ENCODE measurements at regions of chr2 and their contacts with region 1.

Region 1: DNA sequence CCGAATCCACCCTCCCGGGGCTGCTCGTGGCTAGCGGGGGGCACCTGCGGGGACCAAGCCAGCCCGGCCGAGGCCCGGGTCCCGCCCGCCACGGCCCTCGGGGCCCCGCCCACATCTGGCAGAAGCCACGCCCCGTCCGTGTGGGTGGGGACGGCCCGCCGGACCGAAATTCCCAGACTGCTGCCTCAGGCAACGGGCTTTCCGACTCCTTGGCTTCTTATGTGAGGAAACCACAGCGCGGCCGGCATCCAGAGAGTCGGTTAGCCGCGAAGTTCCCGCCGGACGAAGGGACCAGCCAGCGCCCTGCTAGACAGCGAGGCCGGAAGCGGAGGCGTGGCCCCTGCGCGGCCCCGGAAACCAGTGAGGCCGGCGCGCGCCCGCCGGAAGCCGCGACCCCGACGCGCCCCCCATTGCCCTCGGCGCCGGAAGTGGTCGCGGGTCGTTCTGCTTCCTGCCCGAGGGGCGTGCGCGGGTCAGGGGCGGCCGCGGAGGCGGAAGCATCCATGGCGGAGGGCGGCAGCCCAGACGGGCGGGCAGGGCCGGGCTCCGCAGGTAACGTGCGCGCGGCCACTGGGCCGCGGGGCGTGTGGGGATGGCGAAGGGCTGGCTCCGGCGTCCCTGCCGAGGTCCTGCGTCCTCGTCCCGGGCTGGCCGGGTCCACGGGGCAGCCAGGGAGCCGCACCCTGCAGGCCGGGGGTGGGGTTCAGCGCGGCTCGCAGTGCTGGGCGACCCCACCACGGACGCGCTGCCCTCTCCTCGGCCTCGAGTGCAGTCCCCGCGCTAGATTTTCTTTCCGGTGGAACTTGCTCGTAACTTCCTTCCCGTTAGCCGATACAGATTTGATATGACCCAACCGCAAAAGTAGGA is at the start of gene ASB1:
- DNase-seq: peak; percentile 80
- H3K4me3 Mint-ChIP-seq: peak within 1 kb of the TSS; percentile 89
- H3K27ac Mint-ChIP-seq: peak within 1 kb of the TSS; percentile 91
- H3K4me1 Mint-ChIP-seq: peaks cover 42% of the 10 kb centered on the region
- H3K27me3 Mint-ChIP-seq: no peaks in the 10 kb centered on the region
- total RNA-seq, gene ASB1: 29.9 to 33.7 TPM

Region 2: GRCh38 chr2:238415036-238415764 is 11.6 kb before region 1 on chr2:
- CTCF ChIA-PET with region 1: no interaction called
- intact Hi-C with region 1: no loop called
- DNase-seq: peak; percentile 56
- H3K4me3 Mint-ChIP-seq: no peak overlapping the region
- H3K27ac Mint-ChIP-seq: no peak overlapping the region
- H3K4me1 Mint-ChIP-seq: peaks cover 2% of the 10 kb centered on the region
- H3K27me3 Mint-ChIP-seq: no peaks in the 10 kb centered on the region

Region 3: GRCh38 chr2:238438856-238439849 is 12.4 kb after region 1 on chr2:
- CTCF ChIA-PET with region 1: interaction called, 3 read pairs
- intact Hi-C with region 1: loop called (anchors 1 kb)
- DNase-seq: peak; percentile 85
- H3K4me3 Mint-ChIP-seq: peak overlapping the region; percentile 11
- H3K27ac Mint-ChIP-seq: peak overlapping the region; percentile 43
- H3K4me1 Mint-ChIP-seq: peaks cover 48% of the 10 kb centered on the region
- H3K27me3 Mint-ChIP-seq: no peaks in the 10 kb centered on the region